Spleen (tissue), 13 donors: ENCODE measurements at regions of chr3 and their contacts with region 1.

Region 1: DNA sequence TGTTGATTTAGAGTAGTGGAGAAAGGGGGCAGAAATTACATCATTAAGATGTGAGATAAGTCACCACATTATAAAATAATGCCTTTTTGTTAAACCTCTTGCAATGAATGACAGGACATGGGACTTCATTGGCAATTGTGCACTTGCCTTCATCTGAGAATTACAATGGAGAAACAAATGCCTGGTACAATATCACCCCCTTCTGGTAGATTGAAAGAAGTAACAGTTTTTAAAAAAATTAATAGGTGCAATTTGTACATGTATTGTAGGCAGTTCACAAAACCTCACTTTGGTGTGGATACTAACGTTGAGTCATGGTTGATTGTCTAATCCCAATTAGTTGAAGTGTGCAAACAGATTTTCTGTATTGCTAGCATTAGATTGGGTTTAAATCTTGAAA is 4.6 kb upstream of the P2RY14 start:
- DNase-seq: no peak
- H3K4me3 ChIP-seq: no peak overlapping the region
- H3K27ac ChIP-seq: no peak overlapping the region
- H3K4me1 ChIP-seq: peaks cover 8 to 45% (median 23%) of the 10 kb centered on the region in 6 donors
- H3K27me3 ChIP-seq: no peaks in the 10 kb centered on the region
- CTCF ChIP-seq: peak; percentile 32 to 74 (median 57)
- POLR2A ChIP-seq: no peak

Region 2: DNA sequence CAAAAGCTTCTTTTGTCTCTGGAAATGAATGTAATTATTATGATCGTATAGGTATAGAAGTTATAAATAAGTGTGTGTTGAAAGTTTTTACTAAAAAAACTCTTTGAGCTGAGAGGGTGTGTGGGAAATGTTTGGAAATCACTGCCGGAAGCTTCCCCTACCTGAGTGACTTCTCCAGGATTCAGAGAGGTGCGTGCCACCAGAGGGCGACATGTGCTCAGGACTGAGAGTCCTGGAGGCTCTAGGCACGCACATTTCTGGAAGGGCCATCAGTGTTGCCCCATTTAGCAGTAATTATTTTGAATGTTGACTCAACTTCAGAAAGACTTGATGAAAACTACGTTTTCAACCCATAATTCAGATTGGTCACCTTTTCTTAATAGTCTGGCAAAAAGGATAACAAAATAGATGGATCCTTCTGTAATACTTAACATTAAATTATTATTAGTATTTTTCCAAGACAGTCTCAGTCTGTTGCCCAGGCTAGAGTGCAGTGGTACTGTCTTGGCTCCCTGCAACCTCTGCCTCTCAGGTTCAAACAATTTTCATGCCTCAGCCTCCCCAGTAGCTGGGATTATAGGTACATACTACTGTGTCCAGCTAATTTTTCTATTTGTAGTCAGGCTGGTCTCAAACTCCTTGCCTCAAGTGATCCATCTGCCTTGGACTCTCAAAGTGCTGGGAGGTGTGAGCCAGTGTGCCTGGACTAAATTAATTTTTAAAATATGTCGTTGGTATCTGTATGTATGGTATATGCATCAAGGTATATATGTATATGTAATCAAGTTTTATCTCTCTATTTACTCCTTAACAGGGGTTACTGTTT is 114.4 kb before region 1 on chr3:
- intact Hi-C with region 1: loop called (anchors 2 kb)
- DNase-seq: peak; percentile 93
- H3K4me3 ChIP-seq: no peak overlapping the region
- H3K27ac ChIP-seq: peak overlapping the region in 6 of 8 donors; percentile 51 to 87 (median 80)
- H3K4me1 ChIP-seq: peaks cover 25 to 47% (median 41%) of the 10 kb centered on the region in 6 donors
- H3K27me3 ChIP-seq: no peaks in the 10 kb centered on the region
- CTCF ChIP-seq: peak; percentile 45 to 78 (median 69)
- POLR2A ChIP-seq: no peak

Region 3: GRCh38 chr3:151227807-151228665 is 54.9 kb before region 1 on chr3:
- intact Hi-C with region 1: loop called (anchors 5 kb)
- DNase-seq: peak; percentile 90
- H3K4me3 ChIP-seq: peak overlapping the region in 1 of 8 donors; percentile 21
- H3K27ac ChIP-seq: peak overlapping the region in 5 of 8 donors; percentile 5 to 61 (median 39)
- H3K4me1 ChIP-seq: peaks cover 7 to 64% (median 28%) of the 10 kb centered on the region in 6 donors
- H3K27me3 ChIP-seq: no peaks in the 10 kb centered on the region
- CTCF ChIP-seq: peak; percentile 84 to 96 (median 91)
- POLR2A ChIP-seq: no peak

Region 4: GRCh38 chr3:151379083-151379734 is 96.3 kb after region 1 on chr3:
- intact Hi-C with region 1: no loop called
- DNase-seq: no peak
- H3K4me3 ChIP-seq: no peak overlapping the region
- H3K27ac ChIP-seq: no peak overlapping the region
- H3K4me1 ChIP-seq: peaks cover 0 to 34% (median 20%) of the 10 kb centered on the region in 6 donors
- H3K27me3 ChIP-seq: no peaks in the 10 kb centered on the region
- CTCF ChIP-seq: peak in 6 of 11 experiments; percentile 9 to 51 (median 44)
- POLR2A ChIP-seq: no peak

Region 5: GRCh38 chr3:151553888-151554287 is 271.0 kb after region 1 on chr3:
- intact Hi-C with region 1: no loop called
- DNase-seq: no peak
- H3K4me3 ChIP-seq: no peak overlapping the region
- H3K27ac ChIP-seq: no peak overlapping the region
- H3K4me1 ChIP-seq: no peaks in the 10 kb centered on the region
- H3K27me3 ChIP-seq: no peaks in the 10 kb centered on the region
- CTCF ChIP-seq: no peak
- POLR2A ChIP-seq: no peak